Endothelial cell of umbilical vein (primary cell): ENCODE measurements at regions of chr15 and their contacts with region 1.

Region 1: DNA sequence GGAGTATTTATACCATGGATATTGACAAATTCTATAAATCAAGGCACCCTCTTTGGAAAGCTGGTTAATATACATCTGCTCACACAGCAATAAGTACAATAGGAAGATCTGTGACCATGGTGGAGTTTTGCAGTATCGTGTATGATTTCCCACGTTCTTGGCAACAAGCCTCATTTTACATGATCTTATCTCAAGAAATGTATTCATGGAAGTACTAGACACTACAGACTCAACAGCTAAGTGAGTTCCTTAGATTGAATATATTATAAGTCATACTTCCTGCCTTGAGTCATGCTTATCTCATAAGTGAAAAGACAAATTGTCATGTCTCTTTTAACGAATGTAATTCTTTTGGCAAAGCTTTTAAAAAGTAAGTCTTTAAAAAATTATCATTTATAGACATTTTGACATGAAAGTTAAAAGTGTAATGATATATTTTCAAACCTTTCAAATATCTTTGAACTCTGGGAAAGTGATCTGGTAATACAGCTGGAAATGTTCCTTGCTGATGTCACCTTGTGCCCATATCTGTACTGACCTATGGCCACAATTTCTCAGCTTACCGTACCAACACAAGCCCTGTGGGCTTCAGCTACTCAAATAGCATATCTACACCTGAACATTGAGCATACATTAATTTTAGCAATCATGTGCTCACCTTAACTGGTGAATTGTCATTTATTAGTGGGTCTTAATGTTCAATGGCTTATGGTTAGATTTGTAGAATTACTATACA is 130.3 kb upstream of the TMC3 start:
- DNase-seq: peak; percentile 96
- H3K4me3 ChIP-seq: no peak overlapping the region
- H3K27ac ChIP-seq: peak overlapping the region; percentile 82
- H3K4me1 ChIP-seq: peaks cover 19% of the 10 kb centered on the region
- H3K27me3 ChIP-seq: no peaks in the 10 kb centered on the region
- CTCF ChIP-seq: no peak
- POLR2A ChIP-seq: no peak

Region 2: DNA sequence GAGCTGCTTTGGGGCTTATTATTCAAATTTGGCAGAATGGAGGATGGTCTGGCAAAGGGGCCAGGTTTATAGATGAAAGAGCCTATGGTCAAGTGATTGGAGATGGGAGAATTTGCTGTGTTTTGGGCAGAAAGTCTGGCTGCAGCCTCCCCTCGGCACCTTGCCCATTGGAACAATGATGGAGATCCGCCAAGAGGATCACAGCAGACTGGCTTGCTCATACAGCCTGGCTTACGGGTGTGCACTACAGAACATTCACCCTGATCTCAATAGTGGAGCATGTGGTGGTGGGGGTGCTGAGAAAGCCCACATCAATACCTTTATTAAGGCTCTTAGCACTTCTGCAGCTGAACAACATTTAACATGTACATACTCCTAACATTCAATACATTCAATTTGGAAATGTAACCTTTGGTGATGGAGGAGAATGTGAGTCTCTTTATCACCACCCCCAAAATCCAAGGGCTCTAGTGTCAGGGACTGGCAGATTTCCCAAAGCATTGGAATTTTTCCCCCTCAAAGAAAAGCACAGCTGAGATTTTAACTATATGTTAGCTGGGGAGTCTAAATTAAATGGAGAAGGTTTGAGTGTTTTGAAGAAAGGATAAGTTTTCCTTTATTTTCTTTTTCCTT is 11.9 kb before region 1 on chr15:
- CTCF ChIA-PET with region 1: interaction called, 5 read pairs
- POLR2A ChIA-PET with region 1: no interaction called
- dilution Hi-C with region 1: no loop called
- intact Hi-C with region 1: loop called (anchors 1 kb)
- DNase-seq: peak; percentile 76
- H3K4me3 ChIP-seq: no peak overlapping the region
- H3K27ac ChIP-seq: no peak overlapping the region
- H3K4me1 ChIP-seq: peaks cover 4% of the 10 kb centered on the region
- H3K27me3 ChIP-seq: no peaks in the 10 kb centered on the region
- CTCF ChIP-seq: no peak
- POLR2A ChIP-seq: no peak

Region 3: GRCh38 chr15:81516461-81516860 is 12.1 kb after region 1 on chr15:
- CTCF ChIA-PET with region 1: interaction called, 11 read pairs
- POLR2A ChIA-PET with region 1: interaction called, 4 read pairs
- dilution Hi-C with region 1: no loop called
- intact Hi-C with region 1: loop called (anchors 1 kb)
- DNase-seq: peak; percentile 81
- H3K4me3 ChIP-seq: peak overlapping the region in 1 of 3 experiments; percentile 3
- H3K27ac ChIP-seq: no peak overlapping the region
- H3K4me1 ChIP-seq: peaks cover 15% of the 10 kb centered on the region
- H3K27me3 ChIP-seq: no peaks in the 10 kb centered on the region
- CTCF ChIP-seq: no peak
- POLR2A ChIP-seq: no peak

Region 4: DNA sequence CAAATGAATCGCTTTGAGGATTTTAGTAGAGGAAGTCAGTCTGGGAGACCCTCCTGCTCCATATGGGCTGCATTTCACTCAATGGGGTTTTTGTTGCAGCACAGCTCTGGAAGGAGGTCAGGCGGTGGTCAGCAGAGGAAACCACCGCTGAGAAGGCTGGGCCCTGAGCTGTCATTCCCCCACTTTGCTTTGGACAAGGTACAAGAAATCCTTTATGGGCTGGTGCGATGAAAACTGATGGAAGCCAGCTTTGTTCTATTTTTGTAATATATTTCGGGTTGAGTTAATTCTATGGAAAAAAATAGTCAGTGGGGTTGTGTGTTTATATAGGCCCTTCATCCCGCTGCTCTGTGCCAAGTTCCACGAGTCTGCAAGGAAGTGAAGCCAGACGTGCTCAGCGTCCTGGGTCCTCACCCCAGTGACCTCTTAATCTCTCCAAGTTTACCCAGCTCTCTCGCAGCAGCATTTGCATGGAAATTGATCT is 26.8 kb after region 1 on chr15:
- CTCF ChIA-PET with region 1: interaction called, 18 read pairs
- POLR2A ChIA-PET with region 1: interaction called, 4 read pairs
- dilution Hi-C with region 1: no loop called
- intact Hi-C with region 1: loop called (anchors 1 kb)
- DNase-seq: peak; percentile 98
- H3K4me3 ChIP-seq: peak overlapping the region in 1 of 3 experiments; percentile 11
- H3K27ac ChIP-seq: peak overlapping the region; percentile 70
- H3K4me1 ChIP-seq: peaks cover 26% of the 10 kb centered on the region
- H3K27me3 ChIP-seq: no peaks in the 10 kb centered on the region
- CTCF ChIP-seq: no peak
- POLR2A ChIP-seq: peak; percentile 67

Region 5: DNA sequence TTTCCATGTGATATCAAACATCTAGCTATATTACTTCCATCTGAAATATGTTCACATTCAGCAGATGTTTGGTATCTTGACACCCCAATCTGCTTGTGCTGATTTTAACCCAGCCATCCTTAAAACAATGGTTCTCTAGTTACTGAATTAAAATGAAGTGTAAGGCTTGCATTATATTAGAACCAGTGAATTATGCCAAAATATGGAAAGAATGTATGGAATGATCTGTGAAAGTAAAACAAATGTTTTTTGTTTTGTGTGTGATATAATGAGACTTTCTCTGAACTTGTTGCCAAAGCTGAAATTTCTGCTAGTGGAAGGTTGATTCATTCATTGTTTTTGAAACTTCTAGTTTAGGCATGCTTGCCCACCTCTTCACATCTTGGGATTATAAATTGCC is 224.4 kb after region 1 on chr15:
- CTCF ChIA-PET with region 1: no interaction called
- POLR2A ChIA-PET with region 1: no interaction called
- dilution Hi-C with region 1: no loop called
- intact Hi-C with region 1: no loop called
- DNase-seq: no peak
- H3K4me3 ChIP-seq: no peak overlapping the region
- H3K27ac ChIP-seq: no peak overlapping the region
- H3K4me1 ChIP-seq: no peaks in the 10 kb centered on the region
- H3K27me3 ChIP-seq: no peaks in the 10 kb centered on the region
- CTCF ChIP-seq: no peak
- POLR2A ChIP-seq: no peak

Region 6: DNA sequence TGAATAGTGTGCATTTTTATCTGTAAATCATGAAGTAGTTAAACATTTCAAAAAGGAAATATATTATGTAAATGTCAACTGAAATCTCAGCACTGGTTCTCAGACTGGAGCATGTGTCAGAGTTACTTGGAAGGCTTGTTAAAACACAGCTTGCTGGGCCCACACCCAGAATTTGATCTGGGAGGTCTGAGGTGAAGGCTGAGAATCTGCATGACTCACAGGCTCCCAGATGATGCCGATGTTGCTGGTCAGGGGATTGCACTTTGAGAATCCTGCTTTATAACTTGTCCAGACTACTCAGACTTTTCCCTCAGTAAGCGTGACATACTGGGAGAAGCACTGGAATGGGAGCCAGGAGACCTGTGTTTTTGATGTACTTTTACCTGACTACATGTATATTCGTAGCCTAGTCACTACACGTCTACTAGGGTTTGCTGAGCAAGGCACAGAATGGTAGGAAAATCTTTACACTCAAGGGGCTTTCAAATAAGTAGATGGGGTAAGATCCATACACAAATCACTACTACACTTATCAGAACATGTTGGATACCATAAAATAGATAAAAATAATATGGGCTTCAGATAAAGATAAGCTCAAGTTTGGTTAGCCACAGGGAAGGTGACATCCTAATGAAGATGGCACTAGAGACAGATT is 618.5 kb after region 1 on chr15:
- CTCF ChIA-PET with region 1: no interaction called
- POLR2A ChIA-PET with region 1: no interaction called
- dilution Hi-C with region 1: no loop called
- intact Hi-C with region 1: no loop called
- DNase-seq: peak; percentile 74
- H3K4me3 ChIP-seq: no peak overlapping the region
- H3K27ac ChIP-seq: no peak overlapping the region
- H3K4me1 ChIP-seq: peaks cover 8% of the 10 kb centered on the region
- H3K27me3 ChIP-seq: no peaks in the 10 kb centered on the region
- CTCF ChIP-seq: no peak
- POLR2A ChIP-seq: no peak